ENCODE measurements at regions of chr21 and their contacts with region 1.

Region 1: DNA sequence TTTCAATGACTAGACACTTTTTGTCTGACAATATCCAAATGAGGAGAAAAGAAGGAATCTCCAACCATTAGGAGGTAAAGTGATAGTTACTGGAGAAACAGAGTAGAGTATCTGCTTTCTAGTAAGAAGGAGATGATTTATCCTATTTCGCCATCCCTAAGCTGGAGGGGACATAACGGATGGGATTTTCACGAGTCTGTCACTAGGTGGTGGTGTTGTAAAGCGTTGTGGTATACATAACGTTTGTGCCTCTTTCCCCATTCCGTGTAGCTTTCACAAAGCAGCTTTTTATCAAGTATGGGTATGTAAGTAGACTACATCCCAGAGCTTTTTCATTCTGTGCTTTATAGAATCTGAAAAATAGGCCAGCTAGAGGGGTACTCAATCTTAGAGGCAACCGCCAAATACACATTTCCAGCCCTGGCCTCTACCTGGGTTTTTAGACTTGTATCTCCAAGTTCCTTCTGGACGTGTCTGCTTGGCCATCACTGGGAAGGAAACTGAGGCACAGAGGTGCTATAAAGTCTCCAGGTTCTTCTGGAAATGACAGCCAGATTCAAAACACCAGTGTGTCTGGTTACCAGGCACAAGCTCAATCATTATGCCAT is 33.3 kb upstream of the FAM3B start:
- DNase-seq: peak; percentile 72
- H3K4me3 ChIP-seq: no peak overlapping the region
- H3K27ac ChIP-seq: no peak overlapping the region
- H3K4me1 ChIP-seq: no peaks in the 10 kb centered on the region
- H3K27me3 ChIP-seq: no peaks in the 10 kb centered on the region
- CTCF ChIP-seq: peak in 3 of 4 experiments; percentile 78 to 87 (median 86)
- POLR2A ChIP-seq: no peak

Region 2: DNA sequence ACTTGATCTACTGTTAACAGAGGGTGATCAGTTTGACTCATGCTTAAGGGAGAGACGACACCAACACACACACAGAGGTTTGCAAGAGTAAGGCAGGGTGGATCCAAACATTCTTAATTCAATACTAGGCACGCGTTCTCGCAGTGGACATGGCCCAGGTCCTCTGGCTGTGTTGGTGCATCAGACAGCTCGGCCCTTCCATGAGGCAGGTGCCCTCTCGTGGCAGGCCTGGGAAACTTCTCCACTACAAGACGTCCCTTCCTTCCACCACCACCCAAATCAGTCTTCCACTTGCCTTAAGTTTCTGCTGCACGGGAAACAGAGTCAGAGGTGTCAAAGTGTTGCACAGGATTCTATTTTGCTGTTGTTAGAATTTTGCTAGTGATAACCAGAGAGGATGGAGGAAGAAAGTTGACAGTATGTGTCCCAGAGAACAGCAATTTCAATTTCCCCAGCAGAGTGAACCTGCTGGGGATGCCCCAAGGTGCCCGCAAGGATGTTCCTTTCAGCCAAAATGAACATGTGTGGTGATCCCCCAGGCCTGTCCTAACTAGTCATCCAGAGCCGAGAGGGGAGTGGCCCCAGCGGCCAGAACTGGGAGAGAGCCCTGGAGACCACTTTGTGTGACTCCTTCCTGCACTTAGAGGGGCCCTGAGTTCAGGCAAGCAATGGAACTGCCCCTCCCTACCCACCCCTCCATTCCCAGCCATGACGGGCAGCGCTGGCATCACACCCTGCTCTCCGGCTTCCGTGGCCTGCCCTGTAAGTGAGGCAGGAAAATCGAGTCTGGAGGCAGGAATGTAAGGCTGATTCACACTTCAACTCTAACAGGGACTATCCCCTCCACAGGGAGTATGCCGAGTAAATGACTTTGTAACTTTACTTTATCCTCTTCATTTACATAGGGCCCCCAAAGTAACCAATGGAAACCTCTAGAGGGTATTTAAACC is 177.5 kb after region 1 on chr21:
- intact Hi-C with region 1: loop called (anchors 1 kb)
- DNase-seq: peak; percentile 80
- H3K4me3 ChIP-seq: no peak overlapping the region
- H3K27ac ChIP-seq: peak overlapping the region; percentile 12 to 29
- H3K4me1 ChIP-seq: no peaks in the 10 kb centered on the region
- H3K27me3 ChIP-seq: no peaks in the 10 kb centered on the region
- CTCF ChIP-seq: peak; percentile 67 to 91 (median 77)
- POLR2A ChIP-seq: no peak

Region 3: DNA sequence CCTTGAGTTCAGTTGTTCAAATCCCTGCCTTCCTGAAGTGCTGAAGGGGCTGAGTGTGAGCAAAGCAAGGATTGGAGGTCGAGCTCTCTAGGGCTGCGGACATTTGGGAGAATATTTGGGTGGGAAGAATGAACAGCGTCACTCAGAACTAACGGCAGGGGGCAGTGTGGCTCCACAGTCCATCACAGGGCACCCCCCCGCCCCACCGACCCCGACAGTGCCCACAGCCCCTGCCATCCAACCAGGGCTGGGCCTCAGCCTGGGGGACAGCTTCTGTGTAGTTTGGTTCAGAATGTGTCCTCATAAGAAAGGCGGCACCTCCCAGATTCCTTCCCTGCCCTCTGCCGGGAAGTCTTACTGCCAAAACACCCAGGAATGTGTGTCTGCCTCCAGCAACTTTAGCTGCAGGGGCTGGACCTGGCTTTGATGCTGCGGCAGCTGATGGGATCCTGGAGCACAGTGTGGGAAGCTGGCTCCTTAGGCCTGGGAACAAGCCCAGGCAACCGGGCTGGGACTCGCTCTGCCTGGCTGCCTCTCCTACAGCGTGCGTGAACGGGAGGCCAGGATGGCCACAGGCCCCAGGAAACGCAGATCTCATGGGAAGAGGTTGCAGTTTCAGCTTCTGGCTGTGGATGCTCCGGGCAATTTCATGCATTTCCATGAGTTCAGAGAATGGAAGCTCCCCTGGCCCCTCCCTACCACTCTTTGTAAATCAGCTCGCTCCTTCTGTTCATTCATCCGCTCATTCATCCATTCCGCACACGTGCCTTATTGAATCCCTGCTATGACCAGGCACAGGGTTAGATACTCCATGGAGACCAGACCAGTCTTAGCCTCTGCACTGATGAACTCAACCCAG is 329.6 kb after region 1 on chr21:
- intact Hi-C with region 1: loop called (anchors 10 kb)
- DNase-seq: peak; percentile 93
- H3K4me3 ChIP-seq: no peak overlapping the region
- H3K27ac ChIP-seq: peak overlapping the region; percentile 60 to 65
- H3K4me1 ChIP-seq: peaks cover 7% of the 10 kb centered on the region
- H3K27me3 ChIP-seq: no peaks in the 10 kb centered on the region
- CTCF ChIP-seq: peak; percentile 84 to 91 (median 84)
- POLR2A ChIP-seq: no peak

Region 4: GRCh38 chr21:41783441-41784161 is 500.3 kb after region 1 on chr21:
- intact Hi-C with region 1: loop called (anchors 5 kb)
- DNase-seq: peak; percentile 75
- H3K4me3 ChIP-seq: no peak overlapping the region
- H3K27ac ChIP-seq: peak overlapping the region in 1 of 2 donors; percentile 35
- H3K4me1 ChIP-seq: no peaks in the 10 kb centered on the region
- H3K27me3 ChIP-seq: no peaks in the 10 kb centered on the region
- CTCF ChIP-seq: no peak
- POLR2A ChIP-seq: no peak

Measured in prostate gland (tissue), 2 donors.